Activated CD4-positive, alpha-beta memory T cell treated with anti-CD3 and anti-CD28 coated beads, Interleukin-2, amount 10 ng/mL, durations not matched to agents 7 days and 5 days (primary cell): ENCODE measurements at regions of chr19 and their contacts with region 1.

Region 1: DNA sequence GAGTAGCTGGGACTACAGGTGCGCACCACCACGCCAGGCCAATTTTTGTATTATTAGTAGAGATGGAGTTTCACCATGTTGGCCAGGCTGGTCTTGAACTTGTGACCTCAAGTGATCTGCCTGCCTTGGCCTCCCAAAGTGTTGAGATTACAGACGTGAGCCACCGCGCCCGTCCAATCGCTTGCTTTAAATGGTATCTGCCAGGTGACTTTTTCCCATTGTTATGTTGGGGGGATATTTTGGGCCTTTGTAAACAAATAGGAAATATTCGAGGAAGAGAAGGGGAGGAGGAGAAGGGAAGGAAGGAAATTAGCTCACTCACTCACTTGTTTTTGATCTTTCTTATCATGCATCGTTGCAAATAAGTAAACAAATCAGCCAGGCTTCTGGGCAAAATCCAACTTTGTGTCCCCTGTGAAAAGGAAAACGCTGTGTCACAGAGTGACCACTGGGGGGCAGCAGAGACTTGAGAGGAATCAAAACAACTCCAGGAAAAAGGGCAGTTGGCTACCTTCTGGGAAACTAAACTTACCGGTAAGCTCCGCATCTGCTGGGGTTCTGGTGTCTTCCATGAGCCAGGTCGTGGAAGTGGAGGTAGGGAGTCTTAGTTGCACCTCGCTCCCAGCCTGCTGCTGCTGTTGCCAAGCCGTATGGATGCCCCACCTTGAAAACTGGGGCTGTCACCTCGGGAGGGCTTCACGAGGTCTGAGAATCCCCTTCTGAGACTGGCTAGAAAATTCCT is 9.3 kb upstream of the RANBP3 start:
- DNase-seq: peak; percentile 79
- H3K4me3 Mint-ChIP-seq: peak overlapping the region; percentile 69
- H3K27ac Mint-ChIP-seq: peak overlapping the region; percentile 45
- H3K4me1 Mint-ChIP-seq: peaks cover 45% of the 10 kb centered on the region
- H3K27me3 Mint-ChIP-seq: no peaks in the 10 kb centered on the region

Region 2: DNA sequence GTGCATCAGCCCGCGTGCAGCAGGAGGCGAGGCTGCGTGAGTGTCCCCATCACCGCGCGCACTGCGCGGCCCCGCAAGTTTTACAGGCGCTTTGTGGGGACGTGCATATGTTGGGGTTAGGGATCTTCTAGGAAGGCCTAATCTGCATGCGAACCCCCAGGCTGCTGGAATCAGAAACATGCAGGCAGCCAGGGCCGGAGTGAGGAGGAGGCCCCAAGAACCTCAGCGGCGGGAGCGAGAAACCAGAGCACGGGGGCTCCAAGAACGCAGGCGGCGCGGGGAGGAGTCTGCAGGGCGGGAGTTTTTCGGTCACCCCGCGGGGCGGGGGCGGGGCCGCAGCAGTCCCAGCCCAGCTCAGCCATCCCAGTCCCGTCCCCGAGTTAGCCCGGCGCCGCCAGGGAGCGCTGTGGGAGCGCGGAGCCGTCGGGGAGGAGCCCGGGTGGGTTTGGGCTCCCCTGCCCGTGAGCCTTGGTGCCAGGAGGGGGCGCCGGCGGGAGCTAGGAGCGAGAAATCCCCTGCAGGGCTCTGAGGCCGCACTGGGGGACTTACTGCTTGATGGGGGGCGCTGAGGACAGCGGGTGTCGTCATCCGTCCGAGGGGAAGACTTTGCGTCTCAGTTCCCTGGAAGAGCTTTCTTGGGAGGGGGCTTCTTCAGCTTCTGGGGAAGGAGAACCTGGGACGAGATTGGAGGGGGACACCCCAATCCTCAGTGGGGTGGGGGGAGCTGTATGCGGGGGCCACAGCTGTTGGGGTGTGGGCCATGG is 183.3 kb before region 1 on chr19:
- CTCF ChIA-PET with region 1: interaction called, 12 read pairs
- POLR2A ChIA-PET with region 1: no interaction called
- DNase-seq: peak; percentile 94
- H3K4me3 Mint-ChIP-seq: peak overlapping the region; percentile 63
- H3K27ac Mint-ChIP-seq: no peak overlapping the region
- H3K4me1 Mint-ChIP-seq: peaks cover 23% of the 10 kb centered on the region
- H3K27me3 Mint-ChIP-seq: peaks cover 38% of the 10 kb centered on the region

Region 3: GRCh38 chr19:5967994-5968430 is 19.2 kb before region 1 on chr19:
- CTCF ChIA-PET with region 1: interaction called, 11 read pairs
- POLR2A ChIA-PET with region 1: interaction called, 4 read pairs
- DNase-seq: peak; percentile 66
- H3K4me3 Mint-ChIP-seq: no peak overlapping the region
- H3K27ac Mint-ChIP-seq: peak overlapping the region; percentile 76
- H3K4me1 Mint-ChIP-seq: peaks cover 69% of the 10 kb centered on the region
- H3K27me3 Mint-ChIP-seq: no peaks in the 10 kb centered on the region

Region 4: GRCh38 chr19:6056801-6057650 is 69.8 kb after region 1 on chr19:
- CTCF ChIA-PET with region 1: no interaction called
- POLR2A ChIA-PET with region 1: no interaction called
- DNase-seq: no peak
- H3K4me3 Mint-ChIP-seq: no peak overlapping the region
- H3K27ac Mint-ChIP-seq: no peak overlapping the region
- H3K4me1 Mint-ChIP-seq: peaks cover 37% of the 10 kb centered on the region
- H3K27me3 Mint-ChIP-seq: peaks cover 3% of the 10 kb centered on the region

Region 5: GRCh38 chr19:6572217-6572616 is 585.0 kb after region 1 on chr19:
- CTCF ChIA-PET with region 1: no interaction called
- POLR2A ChIA-PET with region 1: no interaction called
- DNase-seq: no peak
- H3K4me3 Mint-ChIP-seq: no peak overlapping the region
- H3K27ac Mint-ChIP-seq: no peak overlapping the region
- H3K4me1 Mint-ChIP-seq: no peaks in the 10 kb centered on the region
- H3K27me3 Mint-ChIP-seq: peaks cover 27% of the 10 kb centered on the region